Cardiac septum (tissue), 1 donor: ENCODE measurements at regions of chr5 and their contacts with region 1.

Region 1: GRCh38 chr5:58498340-58498942 is 7.2 kb downstream of the GAPT start:
- DNase-seq: no peak

Region 2: DNA sequence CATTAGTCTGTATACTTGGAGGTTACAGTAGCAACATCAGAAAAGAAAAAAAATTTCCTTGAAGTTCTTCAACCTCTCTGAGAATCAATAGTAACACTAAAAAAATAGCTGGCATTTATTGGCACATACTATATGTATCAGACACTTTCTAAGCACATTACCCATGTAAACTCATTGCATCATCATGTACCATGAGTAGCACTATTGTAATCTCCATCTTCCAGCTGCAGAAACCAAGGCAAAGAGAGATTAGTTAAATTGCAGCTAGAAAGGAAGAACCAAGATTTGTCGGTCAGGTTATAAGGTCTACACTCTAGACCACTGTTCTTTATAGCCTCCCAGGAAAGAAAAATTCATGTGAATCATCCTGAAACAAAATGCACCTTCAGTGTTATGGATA is 53.1 kb after region 1 on chr5:
- intact Hi-C with region 1: no loop called
- DNase-seq: no peak

Region 3: GRCh38 chr5:58818462-58818861 is 320.0 kb after region 1 on chr5:
- intact Hi-C with region 1: loop called (anchors 10 kb)
- DNase-seq: no peak

Region 4: GRCh38 chr5:58849921-58850667 is 351.7 kb after region 1 on chr5:
- intact Hi-C with region 1: loop called (anchors 2 kb)
- DNase-seq: no peak